CD8-positive, alpha-beta memory T cell (primary cell): ENCODE measurements at regions of chr22 and their contacts with region 1.

Region 1: DNA sequence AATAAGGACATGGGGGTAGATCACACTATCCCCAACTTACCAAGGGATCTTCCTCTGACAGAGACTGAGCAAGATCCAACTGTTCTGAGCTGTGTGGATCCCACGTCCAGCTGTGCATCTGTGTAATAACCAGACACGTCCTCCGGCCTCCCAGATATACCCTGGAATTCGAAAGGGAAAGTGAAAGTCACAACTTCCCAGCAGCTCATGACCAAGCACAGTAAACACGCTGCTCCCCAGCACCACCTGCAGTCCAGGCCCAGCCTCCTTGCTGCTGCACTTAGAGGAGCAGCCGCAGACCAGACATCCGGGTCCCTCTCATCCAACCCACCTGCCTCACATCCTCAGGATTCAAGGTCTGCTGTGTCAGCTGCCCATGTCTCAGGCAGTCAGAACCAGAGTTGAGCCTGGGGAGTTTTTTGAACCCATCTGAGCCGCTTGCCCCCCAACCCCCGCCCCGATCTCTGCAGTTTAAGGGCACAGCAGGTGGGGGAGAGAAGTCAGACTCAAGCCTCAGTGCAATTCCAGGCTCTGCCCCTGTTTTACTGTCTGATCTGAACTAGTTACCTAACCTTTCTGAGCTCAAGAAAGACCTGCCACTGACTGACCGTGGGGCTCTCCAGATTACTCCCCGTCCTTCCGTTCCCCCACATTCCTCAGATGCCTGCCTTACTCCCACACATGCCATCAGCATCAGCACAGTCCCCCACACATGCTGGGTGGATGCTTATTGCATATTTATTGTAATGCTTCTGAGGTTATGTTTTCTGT is at the start of gene APOL2:
- DNase-seq: peak; percentile 80 to 87 (median 82)
- H3K4me3 ChIP-seq: peak within 1 kb of the TSS; percentile 91
- H3K4me3 Mint-ChIP-seq: peak within 1 kb of the TSS; percentile 96 to 100 (median 100)
- H3K27ac ChIP-seq: peak within 1 kb of the TSS; percentile 82
- H3K27ac Mint-ChIP-seq: peak within 1 kb of the TSS; percentile 90 to 100 (median 98)
- H3K4me1 ChIP-seq: peaks cover 37% of the 10 kb centered on the region
- H3K4me1 Mint-ChIP-seq: peaks cover 49 to 56% (median 50%) of the 10 kb centered on the region in 3 donors
- H3K27me3 ChIP-seq: no peaks in the 10 kb centered on the region
- H3K27me3 Mint-ChIP-seq: peaks cover 0 to 1% of the 10 kb centered on the region in 2 donors
- total RNA-seq, gene APOL2: 59.0 to 62.8 TPM

Region 2: GRCh38 chr22:36129486-36130388 is 109.8 kb before region 1 on chr22:
- CTCF ChIA-PET with region 1: no interaction called
- POLR2A ChIA-PET with region 1: no interaction called
- DNase-seq: no peak
- H3K4me3 ChIP-seq: no peak overlapping the region
- H3K4me3 Mint-ChIP-seq: no peak overlapping the region
- H3K27ac ChIP-seq: no peak overlapping the region
- H3K27ac Mint-ChIP-seq: peak overlapping the region in 3 of 8 donors; percentile 26 to 67 (median 63)
- H3K4me1 ChIP-seq: peaks cover 10% of the 10 kb centered on the region
- H3K4me1 Mint-ChIP-seq: peaks cover 5 to 15% (median 12%) of the 10 kb centered on the region in 3 donors
- H3K27me3 ChIP-seq: no peaks in the 10 kb centered on the region
- H3K27me3 Mint-ChIP-seq: no peaks in the 10 kb centered on the region

Region 3: DNA sequence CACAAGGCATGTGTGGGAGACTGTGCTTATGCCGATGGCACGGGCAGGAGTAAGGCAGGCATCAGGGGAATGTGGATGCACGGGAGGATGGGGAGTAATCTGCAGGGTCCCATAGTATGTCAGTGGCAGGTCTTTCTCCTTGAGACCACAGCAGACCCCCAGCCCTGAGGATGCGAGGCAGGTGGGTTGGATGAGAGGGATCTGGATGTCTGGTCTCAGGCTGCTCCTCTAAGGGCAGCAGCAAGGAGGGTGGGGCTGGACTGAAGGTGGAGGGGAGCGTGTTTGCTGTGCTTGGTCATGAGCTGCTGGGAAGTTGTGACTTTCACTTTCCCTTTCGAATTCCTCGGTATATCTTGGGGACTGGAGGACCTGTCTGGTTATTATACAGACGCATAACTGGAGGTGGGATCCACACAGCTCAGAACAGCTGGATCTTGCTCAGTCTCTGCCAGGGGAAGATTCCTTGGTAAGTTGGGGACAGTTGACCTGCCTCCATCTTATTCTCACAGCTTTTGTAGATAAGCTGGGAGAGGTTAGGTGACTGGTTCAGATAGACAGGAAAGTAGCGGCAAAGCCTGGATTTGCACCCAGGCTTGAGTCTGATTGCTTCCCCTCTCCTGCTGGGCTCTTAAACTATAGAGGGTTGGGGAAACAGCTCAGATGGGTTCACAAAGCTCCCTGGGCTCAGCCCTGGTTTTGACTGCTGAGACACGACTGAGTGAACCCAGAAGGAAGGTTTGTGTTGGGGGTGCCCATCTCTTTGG is 13.3 kb after region 1 on chr22 and contains the start of gene APOL1:
- CTCF ChIA-PET with region 1: interaction called, 11 read pairs
- POLR2A ChIA-PET with region 1: interaction called, 4 read pairs
- DNase-seq: peak in 4 of 5 donors; percentile 39 to 70 (median 62)
- H3K4me3 ChIP-seq: peak within 1 kb of the TSS; percentile 74
- H3K4me3 Mint-ChIP-seq: peak within 1 kb of the TSS; percentile 88 to 99 (median 96)
- H3K27ac ChIP-seq: peak within 1 kb of the TSS; percentile 58
- H3K27ac Mint-ChIP-seq: peak within 1 kb of the TSS; percentile 76 to 99 (median 97)
- H3K4me1 ChIP-seq: peaks cover 38% of the 10 kb centered on the region
- H3K4me1 Mint-ChIP-seq: peaks cover 44 to 53% (median 46%) of the 10 kb centered on the region in 3 donors
- H3K27me3 ChIP-seq: no peaks in the 10 kb centered on the region
- H3K27me3 Mint-ChIP-seq: no peaks in the 10 kb centered on the region
- total RNA-seq, gene APOL1: 32.8 to 34.3 TPM

Region 4: DNA sequence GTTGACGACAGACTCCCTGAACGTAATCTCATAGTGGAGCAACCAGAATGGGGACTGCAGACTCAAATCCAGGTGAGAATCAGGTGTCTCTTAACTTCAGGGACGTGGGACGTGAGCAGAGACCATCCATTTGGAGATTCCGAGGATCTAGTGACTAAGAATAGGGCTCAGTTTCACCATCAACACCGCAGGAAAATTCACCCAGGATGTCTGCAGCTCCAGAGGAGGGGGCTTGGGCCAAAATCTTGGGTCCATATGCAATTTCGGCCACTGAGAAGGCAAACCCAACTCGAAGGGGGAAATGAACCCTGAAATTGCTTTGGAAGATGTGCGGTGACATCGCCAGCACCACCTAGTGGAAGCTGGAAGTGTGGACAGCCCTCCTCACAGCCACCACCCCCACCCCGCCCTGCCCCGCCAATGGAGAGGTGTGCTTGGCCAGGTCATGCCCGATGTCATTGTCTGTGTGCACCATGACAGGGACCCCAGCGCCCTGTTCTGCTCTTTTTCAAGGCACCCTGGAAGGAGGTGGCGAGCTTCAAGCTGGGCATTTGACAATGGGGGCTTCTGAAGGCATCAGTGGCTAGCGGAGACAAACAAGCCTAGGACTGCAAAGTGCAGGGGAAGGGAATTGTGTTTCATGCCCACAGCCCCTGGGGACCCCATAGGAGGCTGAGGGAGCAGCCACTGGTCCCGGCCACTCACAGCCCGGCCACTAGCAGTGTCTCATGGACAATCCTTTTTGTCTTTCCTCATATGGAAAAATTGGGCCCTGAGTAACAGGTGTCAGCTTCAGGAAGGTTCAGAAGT is 38.1 kb after region 1 on chr22:
- CTCF ChIA-PET with region 1: interaction called, 29 read pairs
- POLR2A ChIA-PET with region 1: no interaction called
- DNase-seq: peak; percentile 45 to 76 (median 56)
- H3K4me3 ChIP-seq: no peak overlapping the region
- H3K4me3 Mint-ChIP-seq: peak overlapping the region in 1 of 7 donors; percentile 20
- H3K27ac ChIP-seq: no peak overlapping the region
- H3K27ac Mint-ChIP-seq: peak overlapping the region; percentile 28 to 91 (median 58)
- H3K4me1 ChIP-seq: peaks cover 14% of the 10 kb centered on the region
- H3K4me1 Mint-ChIP-seq: peaks cover 13 to 22% (median 18%) of the 10 kb centered on the region in 3 donors
- H3K27me3 ChIP-seq: no peaks in the 10 kb centered on the region
- H3K27me3 Mint-ChIP-seq: peaks cover 0 to 2% of the 10 kb centered on the region in 2 donors

Region 5: GRCh38 chr22:36286471-36287224 is 47.1 kb after region 1 on chr22:
- CTCF ChIA-PET with region 1: interaction called, 11 read pairs
- POLR2A ChIA-PET with region 1: no interaction called
- DNase-seq: peak; percentile 58 to 75 (median 61)
- H3K4me3 ChIP-seq: no peak overlapping the region
- H3K4me3 Mint-ChIP-seq: peak overlapping the region in 6 of 7 donors; percentile 22 to 77 (median 58)
- H3K27ac ChIP-seq: no peak overlapping the region
- H3K27ac Mint-ChIP-seq: peak overlapping the region; percentile 44 to 97 (median 88)
- H3K4me1 ChIP-seq: peaks cover 35% of the 10 kb centered on the region
- H3K4me1 Mint-ChIP-seq: peaks cover 36 to 47% (median 42%) of the 10 kb centered on the region in 3 donors
- H3K27me3 ChIP-seq: no peaks in the 10 kb centered on the region
- H3K27me3 Mint-ChIP-seq: peaks cover 0 to 8% of the 10 kb centered on the region in 2 donors